Mammary epithelial cell (primary cell): ENCODE measurements at regions of chr5 and their contacts with region 1.

Region 1: GRCh38 chr5:179355976-179356974 is 11.0 kb upstream of the ADAMTS2 start:
- DNase-seq: no peak
- H3K4me3 ChIP-seq: no peak overlapping the region
- H3K27ac ChIP-seq: no peak overlapping the region
- H3K4me1 ChIP-seq: no peaks in the 10 kb centered on the region
- H3K27me3 ChIP-seq: no peaks in the 10 kb centered on the region
- CTCF ChIP-seq: no peak

Region 2: DNA sequence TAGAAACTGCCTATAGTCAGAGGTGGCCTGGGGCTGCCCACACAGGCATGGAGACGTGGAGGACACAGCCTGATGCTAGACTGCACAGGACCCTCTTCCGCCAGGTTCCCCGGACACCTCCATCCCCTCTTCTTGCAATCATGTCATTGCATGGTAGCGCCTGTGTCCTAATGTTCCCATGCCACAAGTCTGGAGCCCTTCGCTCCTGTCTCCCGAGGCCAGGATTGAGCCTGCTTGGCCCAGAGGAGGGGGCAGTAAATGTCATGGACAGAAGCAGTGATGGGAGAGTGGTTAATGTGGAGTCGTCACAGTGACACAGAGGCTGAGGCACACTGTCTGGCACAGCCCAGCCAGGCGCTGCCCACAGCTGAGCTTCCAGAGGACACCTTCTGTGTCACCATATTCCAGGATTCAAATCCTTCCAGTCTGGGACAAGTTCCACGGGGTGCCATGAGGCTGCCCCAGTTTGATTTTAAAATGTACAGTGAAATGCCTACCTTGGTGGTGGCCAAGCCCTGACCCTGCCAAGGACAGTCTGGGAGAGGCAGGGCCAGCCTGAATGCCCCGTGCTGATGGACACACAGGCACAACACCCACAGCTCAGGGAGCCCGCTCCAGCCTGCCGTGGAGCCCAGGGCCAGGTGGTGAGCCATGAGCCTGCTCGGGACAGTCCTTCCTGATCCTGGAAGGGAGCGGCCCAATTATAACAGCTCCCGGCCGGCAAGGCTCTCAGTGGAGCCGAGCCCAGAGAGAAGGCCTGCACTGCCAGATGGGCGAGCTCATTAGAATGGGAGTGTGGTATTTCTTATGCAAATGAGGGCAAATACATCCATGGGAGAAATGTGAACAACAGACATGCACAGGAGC is 94.9 kb after region 1 on chr5:
- CTCF ChIA-PET with region 1: no interaction called
- dilution Hi-C with region 1: loop called (anchors 5 kb)
- in situ Hi-C with region 1: no loop called
- intact Hi-C with region 1: no loop called
- DNase-seq: no peak
- H3K4me3 ChIP-seq: no peak overlapping the region
- H3K27ac ChIP-seq: no peak overlapping the region
- H3K4me1 ChIP-seq: no peaks in the 10 kb centered on the region
- H3K27me3 ChIP-seq: no peaks in the 10 kb centered on the region
- CTCF ChIP-seq: no peak